ENCODE measurements at regions of chr5 and their contacts with region 1.

Region 1: GRCh38 chr5:11268891-11269290 is 507.9 kb upstream of the DAP start:
- DNase-seq: no peak
- H3K4me3 Mint-ChIP-seq: no peak overlapping the region
- H3K27ac Mint-ChIP-seq: no peak overlapping the region
- H3K4me1 Mint-ChIP-seq: no peaks in the 10 kb centered on the region
- H3K27me3 Mint-ChIP-seq: no peaks in the 10 kb centered on the region

Region 2: GRCh38 chr5:11234501-11234911 is 34.4 kb before region 1 on chr5:
- intact Hi-C with region 1: no loop called
- DNase-seq: no peak
- H3K4me3 Mint-ChIP-seq: no peak overlapping the region
- H3K27ac Mint-ChIP-seq: no peak overlapping the region
- H3K4me1 Mint-ChIP-seq: peaks cover 10% of the 10 kb centered on the region
- H3K27me3 Mint-ChIP-seq: no peaks in the 10 kb centered on the region

Region 3: DNA sequence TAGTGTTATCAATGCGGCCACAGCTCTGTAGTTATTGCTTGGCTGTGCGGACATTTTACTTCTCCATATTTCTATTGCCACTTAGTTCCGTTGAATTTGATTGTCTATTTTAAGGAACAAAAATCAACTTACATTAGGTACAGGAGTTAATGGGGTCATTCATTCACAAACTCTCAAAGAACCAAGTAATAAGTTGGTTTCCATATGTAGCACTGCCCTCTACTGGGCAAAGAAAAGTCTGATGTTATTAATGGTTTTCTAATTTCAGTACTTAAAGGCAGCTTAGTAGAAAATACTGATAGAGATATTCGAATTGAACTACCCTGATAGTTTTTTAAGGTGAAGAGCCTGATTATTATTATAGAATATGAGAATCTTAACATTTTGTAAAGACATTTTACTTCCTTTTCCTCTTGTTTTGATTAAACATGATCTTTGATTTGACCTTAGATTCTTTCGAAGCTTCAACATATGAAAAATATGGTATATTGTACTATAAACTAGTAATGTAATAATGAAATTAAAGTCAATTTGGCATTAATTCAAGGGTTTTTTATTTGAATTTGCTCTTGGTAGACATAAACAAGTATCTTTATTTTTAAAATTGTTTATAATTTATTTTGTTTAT is 754.8 kb after region 1 on chr5:
- intact Hi-C with region 1: loop called (anchors 5 kb)
- DNase-seq: no peak
- H3K4me3 Mint-ChIP-seq: no peak overlapping the region
- H3K27ac Mint-ChIP-seq: no peak overlapping the region
- H3K4me1 Mint-ChIP-seq: no peaks in the 10 kb centered on the region
- H3K27me3 Mint-ChIP-seq: no peaks in the 10 kb centered on the region